MCF 10A (cell line): ENCODE measurements at regions of chr11 and their contacts with region 1.

Region 1: DNA sequence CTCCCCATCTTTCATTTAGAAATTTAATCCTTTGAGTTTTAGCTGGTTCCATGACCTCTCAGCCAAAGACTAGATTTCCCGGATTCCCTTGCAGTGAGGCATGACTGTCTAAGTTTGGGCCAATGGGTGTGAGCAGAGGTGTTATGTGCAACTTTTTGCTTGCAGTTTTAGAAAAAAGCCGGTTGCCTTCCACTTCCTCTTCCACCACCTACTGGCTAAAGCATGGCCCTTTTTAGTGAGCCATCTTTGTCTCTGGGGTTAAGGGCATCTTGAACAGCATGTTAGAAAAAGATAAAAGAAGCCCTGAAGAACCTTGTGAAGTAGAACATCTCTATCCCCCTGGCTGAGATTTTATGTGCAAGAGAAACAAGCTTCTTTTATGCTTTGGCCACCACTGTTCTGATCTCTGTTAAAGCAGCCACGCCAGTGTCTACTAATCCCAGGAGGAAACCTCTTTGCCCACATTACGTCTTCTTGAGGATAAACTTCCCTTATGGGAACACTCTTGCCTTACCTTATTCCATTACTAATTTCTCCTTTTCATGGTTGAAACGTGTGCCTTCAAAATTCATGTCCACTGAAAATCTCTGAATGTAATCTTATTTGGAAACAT is 279.9 kb downstream of the TENM4 start:
- DNase-seq: peak; percentile 63
- H3K4me3 Mint-ChIP-seq: no peak overlapping the region
- H3K27ac Mint-ChIP-seq: no peak overlapping the region
- H3K4me1 Mint-ChIP-seq: peaks cover 30% of the 10 kb centered on the region
- H3K27me3 Mint-ChIP-seq: no peaks in the 10 kb centered on the region
- CTCF ChIP-seq: peak; percentile 31

Region 2: GRCh38 chr11:79062814-79063762 is 97.8 kb before region 1 on chr11:
- CTCF ChIA-PET with region 1: interaction called, 5 read pairs
- POLR2A ChIA-PET with region 1: interaction called, 3 read pairs
- intact Hi-C with region 1: loop called (anchors 2 kb)
- DNase-seq: peak; percentile 65
- H3K4me3 Mint-ChIP-seq: no peak overlapping the region
- H3K27ac Mint-ChIP-seq: no peak overlapping the region
- H3K4me1 Mint-ChIP-seq: no peaks in the 10 kb centered on the region
- H3K27me3 Mint-ChIP-seq: no peaks in the 10 kb centered on the region
- CTCF ChIP-seq: peak; percentile 47

Region 3: GRCh38 chr11:79173615-79174014 is 12.7 kb after region 1 on chr11:
- CTCF ChIA-PET with region 1: interaction called, 13 read pairs
- POLR2A ChIA-PET with region 1: interaction called, 10 read pairs
- intact Hi-C with region 1: no loop called
- DNase-seq: peak; percentile 45
- H3K4me3 Mint-ChIP-seq: peak overlapping the region; percentile 60
- H3K27ac Mint-ChIP-seq: peak overlapping the region; percentile 62
- H3K4me1 Mint-ChIP-seq: peaks cover 28% of the 10 kb centered on the region
- H3K27me3 Mint-ChIP-seq: no peaks in the 10 kb centered on the region
- CTCF ChIP-seq: no peak

Region 4: DNA sequence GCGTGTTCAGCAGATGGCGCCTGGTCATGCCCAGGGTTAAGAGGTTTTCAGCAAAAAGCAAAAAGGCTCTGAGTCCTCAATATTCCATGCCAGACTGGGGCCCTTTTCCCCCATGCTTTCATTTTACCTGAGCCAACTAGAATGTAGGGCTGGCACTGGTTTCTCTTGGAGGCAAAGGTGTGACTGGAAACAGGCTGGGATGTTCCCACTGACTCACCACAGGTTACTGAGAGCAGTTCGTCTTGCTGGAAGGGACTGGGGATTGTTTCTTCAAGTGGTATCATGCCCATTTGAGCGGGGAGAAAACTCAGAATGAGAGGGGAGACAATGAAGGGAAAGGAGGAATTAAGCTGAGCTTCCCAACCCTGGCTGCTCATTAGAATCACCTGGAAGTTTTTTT is 36.1 kb after region 1 on chr11:
- CTCF ChIA-PET with region 1: no interaction called
- POLR2A ChIA-PET with region 1: no interaction called
- intact Hi-C with region 1: no loop called
- DNase-seq: peak; percentile 68
- H3K4me3 Mint-ChIP-seq: no peak overlapping the region
- H3K27ac Mint-ChIP-seq: no peak overlapping the region
- H3K4me1 Mint-ChIP-seq: peaks cover 25% of the 10 kb centered on the region
- H3K27me3 Mint-ChIP-seq: no peaks in the 10 kb centered on the region
- CTCF ChIP-seq: no peak

Region 5: GRCh38 chr11:79263001-79263400 is 102.1 kb after region 1 on chr11:
- CTCF ChIA-PET with region 1: no interaction called
- POLR2A ChIA-PET with region 1: no interaction called
- intact Hi-C with region 1: no loop called
- DNase-seq: no peak
- H3K4me3 Mint-ChIP-seq: no peak overlapping the region
- H3K27ac Mint-ChIP-seq: no peak overlapping the region
- H3K4me1 Mint-ChIP-seq: no peaks in the 10 kb centered on the region
- H3K27me3 Mint-ChIP-seq: no peaks in the 10 kb centered on the region
- CTCF ChIP-seq: no peak